ENCODE measurements at regions of chr2 and their contacts with region 1.

Region 1: DNA sequence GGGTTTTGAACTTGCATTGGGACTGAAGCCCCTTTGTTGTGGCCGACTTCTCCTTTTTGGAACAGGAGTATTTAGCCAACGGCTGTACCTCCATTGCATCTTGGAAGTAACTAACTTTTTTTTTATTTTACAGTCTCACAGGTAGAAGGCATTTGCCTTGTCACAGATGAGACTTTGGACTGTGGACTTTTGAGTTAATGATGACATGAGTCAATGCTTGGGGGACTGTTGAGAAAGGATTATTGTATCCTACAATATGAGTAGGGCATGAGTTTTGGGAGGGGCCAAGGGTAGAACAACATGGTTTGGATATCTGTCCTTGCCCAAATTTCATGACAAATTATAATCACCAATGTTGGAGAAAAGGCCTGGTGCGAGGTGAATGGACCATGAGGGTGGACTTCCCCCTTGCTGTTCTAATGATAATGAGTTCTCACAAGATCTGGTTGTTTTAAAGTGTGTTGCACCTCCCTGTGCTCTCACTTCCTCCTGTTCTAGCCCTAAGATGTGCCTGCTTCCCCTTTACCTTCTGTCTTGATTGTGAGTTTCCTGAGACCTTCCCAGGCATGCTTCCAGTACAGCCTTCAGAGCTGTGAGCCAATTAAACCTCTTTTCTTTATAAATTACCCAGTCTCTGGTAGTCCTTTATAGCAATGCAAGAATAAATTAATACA is 1269.4 kb upstream of the CHAC2 start:
- DNase-seq: no peak

Region 2: GRCh38 chr2:51368250-51368649 is 1130.0 kb before region 1 on chr2:
- intact Hi-C with region 1: loop called in 1 of 2 experiments (anchors 5 kb)
- DNase-seq: no peak

Measured in posterior vena cava (tissue), 2 donors.